A673 (cell line): ENCODE measurements at regions of chr10 and their contacts with region 1.

Region 1: DNA sequence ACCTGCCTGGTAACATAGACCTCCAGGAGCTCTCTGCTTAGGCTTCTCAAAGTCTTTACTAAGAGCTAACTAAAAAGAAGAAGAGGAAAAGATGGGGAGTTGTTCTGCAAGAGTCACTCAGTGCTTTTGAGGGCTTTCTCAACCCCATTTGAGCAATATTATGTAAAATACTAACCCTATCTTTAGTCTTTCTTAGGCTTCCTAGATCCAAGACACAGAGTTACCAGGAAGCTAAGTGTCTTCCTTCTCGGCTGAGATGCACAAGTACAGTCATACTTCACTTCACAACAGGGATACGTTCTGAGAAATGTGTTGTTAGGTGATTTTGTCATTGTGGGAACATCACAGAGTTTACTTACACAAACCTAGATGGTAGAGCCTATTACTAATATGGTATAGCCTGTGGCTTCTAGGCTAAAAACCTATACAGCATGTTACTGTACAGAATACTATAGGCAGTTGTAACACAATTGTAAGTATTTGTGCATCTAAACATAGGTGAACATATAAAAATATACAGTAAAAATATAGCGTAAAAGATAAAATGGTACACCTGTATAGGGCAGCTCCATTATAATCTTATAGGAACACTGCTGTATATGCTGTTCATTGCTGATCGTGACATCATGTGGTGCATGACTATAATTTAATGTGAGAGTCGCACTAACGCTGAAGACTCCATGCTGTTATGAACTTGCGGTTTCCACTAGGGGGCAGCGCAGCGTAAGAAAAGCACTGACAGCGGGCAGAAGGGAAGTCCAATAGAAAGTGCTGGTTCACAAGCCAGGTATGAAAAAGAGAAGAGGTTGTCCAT is 16.3 kb downstream of the ANKRD22 start:
- DNase-seq: peak; percentile 93
- H3K4me3 ChIP-seq: no peak overlapping the region
- H3K27ac ChIP-seq: no peak overlapping the region
- H3K4me1 ChIP-seq: no peaks in the 10 kb centered on the region
- H3K27me3 ChIP-seq: no peaks in the 10 kb centered on the region
- CTCF ChIP-seq: peak; percentile 95

Region 2: DNA sequence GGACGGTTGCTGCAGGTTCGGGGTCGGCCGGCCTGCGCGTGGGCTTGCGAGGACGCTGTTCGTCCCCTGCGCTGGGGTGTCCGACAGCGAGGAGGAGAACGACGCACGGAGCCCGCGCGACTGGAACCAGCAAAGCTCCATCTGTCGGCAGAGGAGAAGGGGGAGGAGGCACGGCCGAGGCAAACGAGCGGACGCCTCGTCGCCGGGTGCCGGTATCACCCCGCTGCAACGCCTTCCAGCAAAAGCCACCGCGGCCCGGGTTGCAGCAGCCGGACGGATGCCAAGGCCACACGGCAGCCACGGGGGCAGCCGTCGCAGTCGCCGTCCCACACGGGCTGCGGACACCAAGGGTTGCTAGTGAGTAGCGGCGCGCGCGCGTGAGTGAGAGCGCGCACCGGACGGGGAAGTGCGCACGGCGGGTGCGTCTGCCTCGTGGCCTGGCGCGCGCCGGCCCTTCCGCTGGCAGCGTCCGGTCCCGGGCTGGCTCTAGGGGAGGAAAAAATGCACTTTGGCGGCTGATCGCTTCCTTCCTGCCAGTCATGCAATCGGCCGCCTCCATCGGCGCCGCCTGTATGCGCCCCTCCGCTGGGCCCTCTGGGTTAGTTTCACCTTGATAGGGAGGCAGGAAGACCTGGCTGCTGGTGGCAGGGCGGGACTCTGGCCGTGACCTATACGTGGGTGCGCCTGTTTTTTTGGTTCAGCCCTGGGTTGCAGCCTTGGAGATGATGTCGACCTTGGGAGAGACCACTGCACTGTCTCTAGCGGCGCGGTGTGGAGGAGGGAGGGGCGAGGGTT is 45.2 kb after region 1 on chr10:
- CTCF ChIA-PET with region 1: no interaction called
- POLR2A ChIA-PET with region 1: no interaction called
- intact Hi-C with region 1: loop called (anchors 5 kb)
- DNase-seq: peak; percentile 84
- H3K4me3 ChIP-seq: peak overlapping the region; percentile 90
- H3K27ac ChIP-seq: peak overlapping the region; percentile 92
- H3K4me1 ChIP-seq: peaks cover 61% of the 10 kb centered on the region
- H3K27me3 ChIP-seq: no peaks in the 10 kb centered on the region
- CTCF ChIP-seq: peak; percentile 46

Region 3: GRCh38 chr10:88990384-88991160 is 155.3 kb after region 1 on chr10 and contains the start of gene FAS:
- CTCF ChIA-PET with region 1: interaction called, 3 read pairs
- POLR2A ChIA-PET with region 1: no interaction called
- intact Hi-C with region 1: loop called (anchors 2 kb)
- DNase-seq: peak; percentile 66
- H3K4me3 ChIP-seq: peak within 1 kb of the TSS; percentile 89
- H3K27ac ChIP-seq: peak within 1 kb of the TSS; percentile 97
- H3K4me1 ChIP-seq: peaks cover 57% of the 10 kb centered on the region
- H3K27me3 ChIP-seq: no peaks in the 10 kb centered on the region
- CTCF ChIP-seq: no peak
- total RNA-seq, gene FAS: 30.4 and 40.3 TPM in 2 replicates

Region 4: GRCh38 chr10:89029785-89030437 is 194.6 kb after region 1 on chr10:
- CTCF ChIA-PET with region 1: no interaction called
- POLR2A ChIA-PET with region 1: no interaction called
- intact Hi-C with region 1: loop called (anchors 2 kb)
- DNase-seq: peak; percentile 83
- H3K4me3 ChIP-seq: no peak overlapping the region
- H3K27ac ChIP-seq: no peak overlapping the region
- H3K4me1 ChIP-seq: peaks cover 20% of the 10 kb centered on the region
- H3K27me3 ChIP-seq: no peaks in the 10 kb centered on the region
- CTCF ChIP-seq: peak; percentile 89

Region 5: GRCh38 chr10:89207181-89207800 is 372.0 kb after region 1 on chr10 and contains the start of gene CH25H:
- CTCF ChIA-PET with region 1: no interaction called
- POLR2A ChIA-PET with region 1: no interaction called
- intact Hi-C with region 1: no loop called
- DNase-seq: peak; percentile 87
- H3K4me3 ChIP-seq: peak within 1 kb of the TSS; percentile 51
- H3K27ac ChIP-seq: no peak within 1 kb of the TSS
- H3K4me1 ChIP-seq: peaks cover 4% of the 10 kb centered on the region
- H3K27me3 ChIP-seq: no peaks in the 10 kb centered on the region
- CTCF ChIP-seq: no peak
- total RNA-seq, gene CH25H: 0.42 and 0.56 TPM in 2 replicates

Region 6: GRCh38 chr10:90665905-90666662 is 1830.8 kb after region 1 on chr10:
- CTCF ChIA-PET with region 1: no interaction called
- POLR2A ChIA-PET with region 1: no interaction called
- intact Hi-C with region 1: no loop called
- DNase-seq: no peak
- H3K4me3 ChIP-seq: no peak overlapping the region
- H3K27ac ChIP-seq: no peak overlapping the region
- H3K4me1 ChIP-seq: no peaks in the 10 kb centered on the region
- H3K27me3 ChIP-seq: peaks cover 7% of the 10 kb centered on the region
- CTCF ChIP-seq: no peak